PC-9 (cell line): ENCODE measurements at regions of chr20 and their contacts with region 1.

Region 1: DNA sequence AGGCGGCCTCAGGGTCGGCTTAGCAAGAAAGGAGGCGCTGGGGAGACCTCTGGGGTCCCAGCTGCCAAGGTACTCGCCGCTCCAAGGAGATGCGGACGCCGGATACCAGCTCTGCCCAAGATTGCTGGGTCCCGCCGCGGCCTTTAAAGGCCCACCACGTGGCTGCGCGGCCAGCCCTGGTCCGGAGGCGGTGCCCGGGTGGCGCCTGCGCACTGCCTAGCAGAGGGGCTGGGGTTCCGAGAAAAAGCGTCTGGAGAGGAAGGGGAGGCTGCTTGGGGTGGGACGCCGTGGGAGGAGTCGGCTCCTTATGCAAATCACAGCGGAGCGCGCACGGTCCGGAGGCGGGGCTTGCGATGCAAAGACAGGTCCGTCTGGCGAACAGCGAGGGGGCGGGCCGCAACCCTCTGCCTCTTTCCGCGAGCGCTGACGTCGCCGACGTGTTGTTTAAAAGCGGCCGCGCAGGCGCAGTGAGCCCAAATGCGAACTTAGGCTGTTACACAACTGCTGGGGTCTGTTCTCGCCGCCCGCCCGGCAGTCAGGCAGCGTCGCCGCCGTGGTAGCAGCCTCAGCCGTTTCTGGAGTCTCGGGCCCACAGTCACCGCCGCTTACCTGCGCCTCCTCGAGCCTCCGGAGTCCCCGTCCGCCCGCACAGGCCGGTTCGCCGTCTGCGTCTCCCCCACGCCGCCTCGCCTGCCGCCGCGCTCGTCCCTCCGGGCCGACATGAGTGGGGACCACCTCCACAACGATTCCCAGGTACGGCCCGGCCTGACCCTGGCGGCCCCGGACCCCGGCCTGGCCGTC is at the start of gene TOP1:
- DNase-seq: peak; percentile 98 to 100
- H3K4me3 ChIP-seq: peak within 1 kb of the TSS; percentile 90
- H3K27ac ChIP-seq: peak within 1 kb of the TSS; percentile 90
- H3K4me1 ChIP-seq: peaks cover 44% of the 10 kb centered on the region
- H3K27me3 ChIP-seq: no peaks in the 10 kb centered on the region
- CTCF ChIP-seq: no peak
- total RNA-seq, gene TOP1: 39.1 and 55.8 TPM in 2 replicates

Region 2: GRCh38 chr20:40980106-40980827 is 48.3 kb before region 1 on chr20:
- CTCF ChIA-PET with region 1: no interaction called
- POLR2A ChIA-PET with region 1: no interaction called
- intact Hi-C with region 1: no loop called
- DNase-seq: no peak
- H3K4me3 ChIP-seq: no peak overlapping the region
- H3K27ac ChIP-seq: no peak overlapping the region
- H3K4me1 ChIP-seq: no peaks in the 10 kb centered on the region
- H3K27me3 ChIP-seq: no peaks in the 10 kb centered on the region
- CTCF ChIP-seq: no peak

Region 3: GRCh38 chr20:41064377-41064776 is 35.8 kb after region 1 on chr20:
- CTCF ChIA-PET with region 1: no interaction called
- POLR2A ChIA-PET with region 1: no interaction called
- intact Hi-C with region 1: no loop called
- DNase-seq: no peak
- H3K4me3 ChIP-seq: no peak overlapping the region
- H3K27ac ChIP-seq: no peak overlapping the region
- H3K4me1 ChIP-seq: no peaks in the 10 kb centered on the region
- H3K27me3 ChIP-seq: no peaks in the 10 kb centered on the region
- CTCF ChIP-seq: no peak

Region 4: GRCh38 chr20:41078329-41078728 is 49.8 kb after region 1 on chr20:
- CTCF ChIA-PET with region 1: interaction called, 5 read pairs
- POLR2A ChIA-PET with region 1: no interaction called
- intact Hi-C with region 1: loop called (anchors 1 kb)
- DNase-seq: peak; percentile 45 to 88
- H3K4me3 ChIP-seq: no peak overlapping the region
- H3K27ac ChIP-seq: peak overlapping the region; percentile 25; the same call in 1 of the 2 replicates
- H3K4me1 ChIP-seq: peaks cover 11% of the 10 kb centered on the region
- H3K27me3 ChIP-seq: no peaks in the 10 kb centered on the region
- CTCF ChIP-seq: peak; percentile 79